Esophagus squamous epithelium (tissue), 5 donors: ENCODE measurements at regions of chr6 and their contacts with region 1.

Region 1: DNA sequence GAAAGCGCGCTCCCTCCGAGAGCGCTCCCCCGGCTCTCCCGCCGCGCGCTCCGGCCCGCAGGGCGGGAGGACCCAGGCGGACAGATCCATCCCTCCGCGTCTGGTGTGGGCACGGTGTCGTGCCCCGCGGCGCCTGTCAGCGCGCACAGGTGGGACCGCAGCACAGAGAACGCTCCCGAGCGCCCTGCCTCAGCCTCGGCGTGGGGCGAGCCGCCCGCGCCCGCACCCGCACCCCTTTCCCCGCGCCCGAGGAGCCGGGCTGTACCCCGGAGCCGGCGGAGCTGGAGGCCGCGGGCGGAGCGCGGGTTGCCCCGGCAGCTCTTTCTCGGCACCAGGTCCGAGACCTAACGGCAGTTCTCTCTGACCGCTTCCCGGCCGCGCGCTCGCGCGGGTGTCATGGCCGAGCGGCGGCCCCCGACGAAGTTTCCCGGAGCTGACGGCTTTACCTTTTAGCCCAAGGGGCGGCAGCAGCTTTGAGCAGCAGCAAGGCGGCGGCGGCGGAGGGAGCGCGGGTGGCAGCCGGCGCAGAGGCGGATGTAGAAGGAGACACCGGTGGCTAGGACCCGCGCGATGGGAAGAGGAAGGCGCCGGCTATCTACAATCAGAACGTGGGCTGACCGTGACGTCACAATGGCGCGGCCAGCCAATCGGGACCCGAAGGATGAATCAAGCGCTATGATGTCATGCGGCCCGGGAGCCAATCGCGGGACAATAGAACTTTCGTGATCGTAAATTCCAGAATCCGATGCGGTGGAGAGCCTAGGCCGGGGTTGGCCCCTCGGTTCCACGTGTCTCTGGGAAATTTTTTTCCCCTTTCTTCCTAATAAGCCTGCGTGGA is at the start of gene ELOVL5:
- DNase-seq: peak; percentile 96
- H3K4me3 ChIP-seq: peak within 1 kb of the TSS; percentile 64 to 99 (median 95)
- H3K27ac ChIP-seq: peak within 1 kb of the TSS; percentile 91 to 99 (median 98)
- H3K4me1 ChIP-seq: peaks cover 3 to 48% (median 7%) of the 10 kb centered on the region in 3 donors
- H3K27me3 ChIP-seq: no peaks in the 10 kb centered on the region
- CTCF ChIP-seq: peak in 3 of 6 experiments; percentile 3 to 24 (median 9)
- POLR2A ChIP-seq: peak in 3 of 4 donors; percentile 78 to 91 (median 83)
- total RNA-seq, gene ELOVL5: 12.4 to 50.0 (median 33.2) TPM

Region 2: DNA sequence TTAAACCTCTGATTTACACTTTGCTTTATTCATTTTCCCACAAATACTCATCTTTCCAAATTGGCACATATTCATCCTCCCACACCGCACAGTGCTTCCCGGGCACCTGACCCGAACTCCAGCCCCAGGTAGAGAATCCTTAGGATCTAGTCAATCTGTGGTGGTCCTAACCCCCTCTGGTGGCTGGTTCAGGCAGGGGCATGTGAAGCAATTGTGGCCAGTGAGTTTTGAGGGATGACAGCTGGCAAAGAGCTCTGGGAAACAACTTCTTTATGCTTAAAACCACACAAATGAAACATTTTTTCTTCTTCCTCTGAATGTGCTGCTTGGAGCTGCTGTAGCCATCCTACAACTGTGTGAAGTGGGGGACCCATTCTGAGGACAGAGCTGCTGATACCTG is 54.5 kb before region 1 on chr6:
- intact Hi-C with region 1: loop called (anchors 10 kb)
- DNase-seq: no peak
- H3K4me3 ChIP-seq: no peak overlapping the region
- H3K27ac ChIP-seq: no peak overlapping the region
- H3K4me1 ChIP-seq: peaks cover 6 to 52% (median 9%) of the 10 kb centered on the region in 3 donors
- H3K27me3 ChIP-seq: no peaks in the 10 kb centered on the region
- CTCF ChIP-seq: peak in 4 of 6 experiments; percentile 21 to 56 (median 42)
- POLR2A ChIP-seq: no peak

Region 3: GRCh38 chr6:53432318-53433161 is 84.0 kb after region 1 on chr6:
- intact Hi-C with region 1: no loop called
- DNase-seq: no peak
- H3K4me3 ChIP-seq: no peak overlapping the region
- H3K27ac ChIP-seq: peak overlapping the region in 1 of 4 donors; percentile 31
- H3K4me1 ChIP-seq: peaks cover 0 to 10% (median 4%) of the 10 kb centered on the region in 3 donors
- H3K27me3 ChIP-seq: peaks cover 0 to 5% (median 0%) of the 10 kb centered on the region in 4 donors
- CTCF ChIP-seq: no peak
- POLR2A ChIP-seq: no peak

Region 4: GRCh38 chr6:53679446-53679933 is 330.9 kb after region 1 on chr6:
- intact Hi-C with region 1: no loop called
- DNase-seq: no peak
- H3K4me3 ChIP-seq: no peak overlapping the region
- H3K27ac ChIP-seq: no peak overlapping the region
- H3K4me1 ChIP-seq: no peaks in the 10 kb centered on the region
- H3K27me3 ChIP-seq: peaks cover 0 to 20% (median 0%) of the 10 kb centered on the region in 4 donors
- CTCF ChIP-seq: peak in 5 of 6 experiments; percentile 12 to 42 (median 30)
- POLR2A ChIP-seq: no peak

Region 5: GRCh38 chr6:54100411-54101006 is 751.9 kb after region 1 on chr6:
- intact Hi-C with region 1: no loop called
- DNase-seq: no peak
- H3K4me3 ChIP-seq: no peak overlapping the region
- H3K27ac ChIP-seq: no peak overlapping the region
- H3K4me1 ChIP-seq: peaks cover 0 to 7% (median 0%) of the 10 kb centered on the region in 3 donors
- H3K27me3 ChIP-seq: no peaks in the 10 kb centered on the region
- CTCF ChIP-seq: no peak
- POLR2A ChIP-seq: no peak